Calu3 (cell line): ENCODE measurements at regions of chr15 and their contacts with region 1.

Region 1: GRCh38 chr15:74291101-74292071 is 55.3 kb downstream of the CCDC33 start:
- DNase-seq: peak; percentile 89
- H3K4me3 Mint-ChIP-seq: no peak overlapping the region
- H3K27ac Mint-ChIP-seq: no peak overlapping the region
- H3K4me1 Mint-ChIP-seq: no peaks in the 10 kb centered on the region
- H3K27me3 Mint-ChIP-seq: peaks cover 92% of the 10 kb centered on the region
- CTCF ChIP-seq: no peak

Region 2: GRCh38 chr15:73882774-73883419 is 408.5 kb before region 1 on chr15:
- CTCF ChIA-PET with region 1: no interaction called
- intact Hi-C with region 1: no loop called
- DNase-seq: no peak
- H3K4me3 Mint-ChIP-seq: no peak overlapping the region
- H3K27ac Mint-ChIP-seq: no peak overlapping the region
- H3K4me1 Mint-ChIP-seq: no peaks in the 10 kb centered on the region
- H3K27me3 Mint-ChIP-seq: peaks cover 99% of the 10 kb centered on the region
- CTCF ChIP-seq: no peak

Region 3: GRCh38 chr15:74245342-74245931 is 45.9 kb before region 1 on chr15:
- CTCF ChIA-PET with region 1: no interaction called
- intact Hi-C with region 1: loop called (anchors 5 kb)
- DNase-seq: no peak
- H3K4me3 Mint-ChIP-seq: no peak overlapping the region
- H3K27ac Mint-ChIP-seq: no peak overlapping the region
- H3K4me1 Mint-ChIP-seq: peaks cover 42% of the 10 kb centered on the region
- H3K27me3 Mint-ChIP-seq: peaks cover 12% of the 10 kb centered on the region
- CTCF ChIP-seq: no peak